IMR-90 (cell line): ENCODE measurements at regions of chr11 and their contacts with region 1.

Region 1: GRCh38 chr11:7892840-7893254 is 38.2 kb downstream of the OR10A6 start:
- DNase-seq: peak; percentile 74
- ATAC-seq: peak; percentile 89
- H3K4me3 ChIP-seq: no peak overlapping the region
- H3K27ac ChIP-seq: peak overlapping the region; percentile 55; the same call in 1 of the 2 replicates
- H3K4me1 ChIP-seq: peaks cover 9% of the 10 kb centered on the region
- H3K27me3 ChIP-seq: no peaks in the 10 kb centered on the region
- CTCF ChIP-seq: peak; percentile 77
- POLR2A ChIP-seq: no peak
- RAD21 ChIP-seq: peak; percentile 73

Region 2: DNA sequence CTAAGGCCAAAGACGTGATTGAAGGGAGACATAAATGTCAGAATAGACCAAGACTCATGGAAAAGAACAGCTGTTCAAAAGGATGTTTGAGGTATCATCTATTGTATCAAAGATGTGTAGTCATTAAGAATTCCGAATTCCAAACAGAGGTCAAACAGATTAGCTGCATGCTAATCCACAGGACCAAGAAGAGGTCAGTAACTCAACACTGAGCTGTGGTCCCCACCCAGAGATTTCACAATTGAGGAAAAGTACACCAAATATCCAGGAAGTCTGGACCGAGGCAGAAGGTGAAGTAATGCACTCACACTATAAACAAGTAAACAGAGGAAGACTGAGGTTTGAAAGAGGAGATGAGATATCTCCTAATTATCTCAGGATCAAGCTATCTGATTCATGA is 66.5 kb before region 1 on chr11:
- CTCF ChIA-PET with region 1: no interaction called
- POLR2A ChIA-PET with region 1: no interaction called
- dilution Hi-C with region 1: no loop called
- in situ Hi-C with region 1: no loop called
- intact Hi-C with region 1: no loop called
- DNase-seq: no peak
- ATAC-seq: no peak
- H3K4me3 ChIP-seq: no peak overlapping the region
- H3K27ac ChIP-seq: no peak overlapping the region
- H3K4me1 ChIP-seq: no peaks in the 10 kb centered on the region
- H3K27me3 ChIP-seq: no peaks in the 10 kb centered on the region
- CTCF ChIP-seq: no peak
- POLR2A ChIP-seq: no peak
- RAD21 ChIP-seq: no peak

Region 3: GRCh38 chr11:7871056-7871455 is 21.8 kb before region 1 on chr11:
- CTCF ChIA-PET with region 1: no interaction called
- POLR2A ChIA-PET with region 1: no interaction called
- dilution Hi-C with region 1: no loop called
- in situ Hi-C with region 1: no loop called
- intact Hi-C with region 1: no loop called
- DNase-seq: peak; percentile 54
- ATAC-seq: no peak
- H3K4me3 ChIP-seq: no peak overlapping the region
- H3K27ac ChIP-seq: no peak overlapping the region
- H3K4me1 ChIP-seq: no peaks in the 10 kb centered on the region
- H3K27me3 ChIP-seq: no peaks in the 10 kb centered on the region
- CTCF ChIP-seq: no peak
- POLR2A ChIP-seq: no peak
- RAD21 ChIP-seq: no peak

Region 4: DNA sequence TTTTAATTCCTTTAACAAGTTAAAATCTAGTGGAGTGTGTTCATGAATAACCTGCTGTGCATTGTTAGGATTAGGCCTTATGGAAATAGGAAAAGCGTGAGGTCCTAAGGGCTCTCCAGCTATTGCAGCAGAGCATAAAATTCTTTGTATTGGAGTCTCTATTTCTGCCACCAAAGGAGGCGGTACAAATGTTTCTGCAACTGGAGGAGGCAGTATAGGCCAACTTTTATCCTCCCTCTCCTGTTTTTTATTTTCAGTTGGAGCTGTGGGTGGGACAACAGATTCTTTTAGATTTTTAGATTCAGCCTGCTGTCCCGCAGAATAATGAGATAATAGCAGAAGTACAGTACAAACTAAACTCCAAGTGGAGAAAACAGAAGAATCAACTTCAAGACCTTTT is 12.1 kb after region 1 on chr11:
- CTCF ChIA-PET with region 1: interaction called, 19 read pairs
- POLR2A ChIA-PET with region 1: no interaction called
- dilution Hi-C with region 1: no loop called
- in situ Hi-C with region 1: no loop called
- intact Hi-C with region 1: no loop called
- DNase-seq: peak; percentile 69
- ATAC-seq: peak; percentile 57
- H3K4me3 ChIP-seq: no peak overlapping the region
- H3K27ac ChIP-seq: no peak overlapping the region
- H3K4me1 ChIP-seq: peaks cover 9% of the 10 kb centered on the region
- H3K27me3 ChIP-seq: no peaks in the 10 kb centered on the region
- CTCF ChIP-seq: peak; percentile 71
- POLR2A ChIP-seq: no peak
- RAD21 ChIP-seq: peak; percentile 74

Region 5: DNA sequence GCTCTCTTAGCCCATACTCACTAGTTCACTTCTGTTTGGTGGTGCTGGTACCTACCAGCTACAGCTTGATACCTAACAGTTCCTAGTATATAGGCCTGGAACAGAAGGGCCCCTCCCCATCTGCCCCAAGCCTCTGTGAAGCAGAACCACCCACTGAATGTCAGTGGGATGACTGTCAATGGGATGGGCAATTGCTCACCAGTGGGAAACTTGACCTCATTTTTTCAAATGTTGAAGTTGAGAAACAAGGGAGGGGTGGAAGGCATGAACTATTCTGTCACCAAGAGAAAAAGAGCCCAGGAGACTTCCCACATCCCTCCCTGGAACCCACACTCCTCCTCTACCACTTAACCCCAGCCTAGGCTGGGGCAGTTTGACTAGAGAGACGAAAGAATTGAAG is 72.5 kb after region 1 on chr11 and contains the start of gene NLRP10:
- CTCF ChIA-PET with region 1: no interaction called
- POLR2A ChIA-PET with region 1: no interaction called
- dilution Hi-C with region 1: no loop called
- in situ Hi-C with region 1: no loop called
- intact Hi-C with region 1: loop called (anchors 5 kb)
- DNase-seq: peak; percentile 95
- ATAC-seq: peak; percentile 85
- H3K4me3 ChIP-seq: no peak within 1 kb of the TSS
- H3K27ac ChIP-seq: peak within 1 kb of the TSS; percentile 90
- H3K4me1 ChIP-seq: peaks cover 32% of the 10 kb centered on the region
- H3K27me3 ChIP-seq: no peaks in the 10 kb centered on the region
- CTCF ChIP-seq: no peak
- POLR2A ChIP-seq: peak; percentile 60; the same call in 1 of the 2 replicates
- RAD21 ChIP-seq: no peak
- total RNA-seq, gene NLRP10: 25.6 and 36.7 TPM in 2 replicates

Region 6: GRCh38 chr11:7986768-7987559 is 94.1 kb after region 1 on chr11 and contains the start of gene EIF3F:
- CTCF ChIA-PET with region 1: interaction called, 51 read pairs
- POLR2A ChIA-PET with region 1: interaction called, 5 read pairs
- dilution Hi-C with region 1: no loop called
- in situ Hi-C with region 1: loop called (anchors 5 kb)
- intact Hi-C with region 1: loop called (anchors 1 kb)
- DNase-seq: peak; percentile 100
- ATAC-seq: peak; percentile 98
- H3K4me3 ChIP-seq: peak within 1 kb of the TSS; percentile 97
- H3K27ac ChIP-seq: peak within 1 kb of the TSS; percentile 81
- H3K4me1 ChIP-seq: peaks cover 7% of the 10 kb centered on the region
- H3K27me3 ChIP-seq: no peaks in the 10 kb centered on the region
- CTCF ChIP-seq: peak; percentile 96
- POLR2A ChIP-seq: 0 out of 2 replicates have a peak, but pooled peaks have one; percentile 13
- RAD21 ChIP-seq: peak; percentile 93
- total RNA-seq, gene EIF3F: 279 and 308 TPM in 2 replicates

Region 7: DNA sequence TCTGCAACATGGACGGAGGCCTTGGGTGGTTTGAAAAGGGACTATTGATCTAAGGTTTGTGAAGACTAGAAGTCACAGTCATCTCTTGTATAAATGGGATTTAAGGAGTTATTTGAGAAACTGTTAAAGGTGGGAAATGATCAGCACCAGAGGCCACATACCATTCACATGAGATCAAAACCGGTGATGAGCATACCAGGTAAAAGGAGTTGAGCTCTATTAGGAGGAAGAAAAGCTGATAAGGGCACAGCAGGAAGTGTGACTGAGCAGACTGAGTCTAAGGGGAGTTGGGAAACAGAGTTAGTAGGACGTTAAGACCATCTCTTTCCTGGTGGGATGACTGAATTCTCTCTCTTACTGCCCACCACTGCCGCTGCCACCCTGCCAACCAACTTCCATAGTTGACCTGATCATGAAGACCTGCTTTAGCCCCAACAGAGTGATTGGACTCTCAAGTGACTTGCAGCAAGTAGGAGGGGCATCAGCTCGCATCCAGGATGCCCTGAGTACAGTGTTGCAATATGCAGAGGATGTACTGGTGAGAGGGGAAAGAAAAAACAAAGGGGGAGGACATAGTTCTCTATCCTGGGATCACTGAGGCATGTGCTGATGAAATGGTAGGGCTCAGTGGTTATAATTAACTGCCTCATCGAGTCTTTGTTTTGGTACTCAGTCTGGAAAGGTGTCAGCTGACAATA is 101.9 kb after region 1 on chr11:
- CTCF ChIA-PET with region 1: interaction called, 8 read pairs
- POLR2A ChIA-PET with region 1: no interaction called
- dilution Hi-C with region 1: no loop called
- in situ Hi-C with region 1: loop called (anchors 5 kb)
- intact Hi-C with region 1: no loop called
- DNase-seq: no peak
- ATAC-seq: no peak
- H3K4me3 ChIP-seq: no peak overlapping the region
- H3K27ac ChIP-seq: no peak overlapping the region
- H3K4me1 ChIP-seq: no peaks in the 10 kb centered on the region
- H3K27me3 ChIP-seq: no peaks in the 10 kb centered on the region
- CTCF ChIP-seq: no peak
- POLR2A ChIP-seq: no peak
- RAD21 ChIP-seq: no peak